ENCODE measurements at regions of chr4 and their contacts with region 1.

Region 1: GRCh38 chr4:176377780-176378179 is 58.0 kb downstream of the SPCS3 start:
- DNase-seq: peak; percentile 41
- H3K4me3 ChIP-seq: no peak overlapping the region
- H3K27ac ChIP-seq: no peak overlapping the region
- H3K4me1 ChIP-seq: no peaks in the 10 kb centered on the region
- H3K27me3 ChIP-seq: no peaks in the 10 kb centered on the region
- CTCF ChIP-seq: peak; percentile 41 to 58

Region 2: GRCh38 chr4:176635372-176636261 is 257.8 kb after region 1 on chr4:
- CTCF ChIA-PET with region 1: no interaction called
- dilution Hi-C with region 1: no loop called
- in situ Hi-C with region 1: loop called in 1 of 2 experiments (anchors 25 kb)
- intact Hi-C with region 1: loop called (anchors 5 kb)
- DNase-seq: peak; percentile 91
- H3K4me3 ChIP-seq: no peak overlapping the region
- H3K27ac ChIP-seq: peak overlapping the region; percentile 41
- H3K4me1 ChIP-seq: peaks cover 29% of the 10 kb centered on the region
- H3K27me3 ChIP-seq: no peaks in the 10 kb centered on the region
- CTCF ChIP-seq: peak; percentile 7 to 27

Region 3: GRCh38 chr4:176660561-176660960 is 282.8 kb after region 1 on chr4:
- CTCF ChIA-PET with region 1: interaction called, 3 read pairs
- dilution Hi-C with region 1: no loop called
- in situ Hi-C with region 1: no loop called
- intact Hi-C with region 1: loop called (anchors 1 kb)
- DNase-seq: no peak
- H3K4me3 ChIP-seq: no peak overlapping the region
- H3K27ac ChIP-seq: no peak overlapping the region
- H3K4me1 ChIP-seq: no peaks in the 10 kb centered on the region
- H3K27me3 ChIP-seq: no peaks in the 10 kb centered on the region
- CTCF ChIP-seq: peak; percentile 31 to 58

Region 4: GRCh38 chr4:176964116-176964691 is 586.4 kb after region 1 on chr4:
- CTCF ChIA-PET with region 1: no interaction called
- dilution Hi-C with region 1: no loop called
- in situ Hi-C with region 1: no loop called
- intact Hi-C with region 1: loop called (anchors 1 kb)
- DNase-seq: peak; percentile 32
- H3K4me3 ChIP-seq: no peak overlapping the region
- H3K27ac ChIP-seq: no peak overlapping the region
- H3K4me1 ChIP-seq: no peaks in the 10 kb centered on the region
- H3K27me3 ChIP-seq: no peaks in the 10 kb centered on the region
- CTCF ChIP-seq: peak; percentile 46 to 63

Region 5: DNA sequence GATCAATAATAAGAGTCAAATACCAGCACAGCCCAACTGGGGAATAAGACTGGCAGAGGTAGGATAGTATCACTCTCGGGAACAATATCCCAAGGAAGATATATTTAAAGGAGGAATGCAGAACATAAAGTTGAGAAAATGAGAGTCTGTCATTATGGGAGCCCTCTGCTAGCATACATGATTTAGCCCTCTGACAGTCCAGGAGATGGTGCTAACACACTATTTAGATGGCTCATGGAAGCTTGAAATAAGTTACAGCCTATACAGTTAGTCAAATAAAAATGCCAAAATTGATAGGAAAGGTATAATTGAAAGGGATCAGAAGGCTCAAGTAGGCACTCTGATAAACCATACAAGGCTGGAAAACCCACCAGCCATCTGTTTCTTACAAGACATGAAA is 730.9 kb after region 1 on chr4:
- CTCF ChIA-PET with region 1: no interaction called
- dilution Hi-C with region 1: no loop called
- in situ Hi-C with region 1: no loop called
- intact Hi-C with region 1: loop called (anchors 5 kb)
- DNase-seq: peak; percentile 21
- H3K4me3 ChIP-seq: no peak overlapping the region
- H3K27ac ChIP-seq: no peak overlapping the region
- H3K4me1 ChIP-seq: no peaks in the 10 kb centered on the region
- H3K27me3 ChIP-seq: no peaks in the 10 kb centered on the region
- CTCF ChIP-seq: peak; percentile 33 to 63

Region 6: DNA sequence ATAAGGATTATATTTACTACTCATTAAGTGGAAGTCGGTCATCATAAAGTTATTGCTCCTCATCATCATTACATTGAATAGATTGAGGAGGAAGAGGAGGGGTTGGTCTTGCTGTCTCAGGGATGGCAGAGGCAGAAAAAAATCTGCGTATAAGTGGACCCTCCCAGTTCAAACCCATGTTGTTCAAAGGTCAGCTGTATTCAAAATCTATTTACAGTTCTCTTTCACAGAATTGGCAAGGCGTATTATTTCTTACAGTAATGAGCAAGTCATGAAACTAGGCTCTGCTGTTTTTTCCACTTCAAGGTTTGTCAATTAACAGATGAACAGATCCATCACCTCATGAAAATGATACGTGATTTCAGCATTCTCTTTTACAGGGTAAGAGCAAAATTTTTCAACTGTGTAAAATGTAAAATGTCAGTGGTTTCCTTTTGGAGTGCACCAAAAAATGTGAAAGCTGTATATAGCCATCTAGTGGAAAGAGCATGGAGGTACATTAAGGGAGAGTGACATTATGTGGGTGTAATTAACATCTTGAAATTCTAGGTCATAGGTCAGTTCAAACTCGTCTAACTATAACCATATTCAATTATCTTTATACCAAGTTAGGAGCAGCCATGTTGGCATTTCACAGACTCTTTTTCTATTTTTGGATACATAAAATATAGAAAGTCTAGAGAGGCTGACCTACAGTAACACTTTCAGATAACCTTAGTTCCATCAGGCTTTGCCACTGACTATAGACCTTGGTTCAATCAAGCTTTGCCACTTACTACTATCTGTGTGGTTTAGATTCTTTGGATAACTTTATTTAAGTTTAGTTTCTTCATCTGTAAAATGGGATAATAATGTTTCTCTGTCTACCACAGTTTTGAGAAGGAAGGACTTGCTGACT is 961.9 kb after region 1 on chr4:
- CTCF ChIA-PET with region 1: no interaction called
- dilution Hi-C with region 1: no loop called
- in situ Hi-C with region 1: no loop called
- intact Hi-C with region 1: loop called (anchors 2 kb)
- DNase-seq: peak; percentile 35
- H3K4me3 ChIP-seq: no peak overlapping the region
- H3K27ac ChIP-seq: no peak overlapping the region
- H3K4me1 ChIP-seq: no peaks in the 10 kb centered on the region
- H3K27me3 ChIP-seq: no peaks in the 10 kb centered on the region
- CTCF ChIP-seq: peak; percentile 70 to 77